Activated CD4-positive, alpha-beta T cell treated with anti-CD3 and anti-CD28 coated beads for 36 hours (primary cell): ENCODE measurements at regions of chr12 and their contacts with region 1.

Region 1: GRCh38 chr12:131830335-131830913 is 2.2 kb downstream of the MMP17 start:
- DNase-seq: peak; percentile 69
- ATAC-seq: peak; percentile 63
- H3K4me3 Mint-ChIP-seq: peak overlapping the region; percentile 12
- H3K27ac Mint-ChIP-seq: no peak overlapping the region
- H3K4me1 Mint-ChIP-seq: peaks cover 11% of the 10 kb centered on the region
- H3K27me3 Mint-ChIP-seq: peaks cover 39% of the 10 kb centered on the region

Region 2: GRCh38 chr12:131755305-131756113 is 74.9 kb before region 1 on chr12:
- CTCF ChIA-PET with region 1: interaction called, 3 read pairs
- POLR2A ChIA-PET with region 1: no interaction called
- intact Hi-C with region 1: loop called in 1 of 2 experiments (anchors 2 kb)
- DNase-seq: peak; percentile 66
- ATAC-seq: peak; percentile 98
- H3K4me3 Mint-ChIP-seq: no peak overlapping the region
- H3K27ac Mint-ChIP-seq: peak overlapping the region; percentile 37
- H3K4me1 Mint-ChIP-seq: peaks cover 2% of the 10 kb centered on the region
- H3K27me3 Mint-ChIP-seq: no peaks in the 10 kb centered on the region

Region 3: GRCh38 chr12:131971226-131971625 is 140.8 kb after region 1 on chr12:
- CTCF ChIA-PET with region 1: no interaction called
- POLR2A ChIA-PET with region 1: no interaction called
- intact Hi-C with region 1: no loop called
- DNase-seq: no peak
- ATAC-seq: no peak
- H3K4me3 Mint-ChIP-seq: no peak overlapping the region
- H3K27ac Mint-ChIP-seq: no peak overlapping the region
- H3K4me1 Mint-ChIP-seq: peaks cover 32% of the 10 kb centered on the region
- H3K27me3 Mint-ChIP-seq: no peaks in the 10 kb centered on the region